Naive thymus-derived CD4-positive, alpha-beta T cell (primary cell): ENCODE measurements at regions of chr2 and their contacts with region 1.

Region 1: GRCh38 chr2:70283500-70284191 is 9.9 kb downstream of the SNRPG start:
- DNase-seq: no peak
- ATAC-seq: no peak
- H3K4me3 ChIP-seq: no peak overlapping the region
- H3K4me3 Mint-ChIP-seq: peak overlapping the region in 4 of 10 donors; percentile 6 to 53 (median 42)
- H3K27ac ChIP-seq: peak overlapping the region; percentile 7
- H3K27ac Mint-ChIP-seq: peak overlapping the region in 8 of 9 donors; percentile 6 to 71 (median 48)
- H3K4me1 ChIP-seq: no peaks in the 10 kb centered on the region
- H3K4me1 Mint-ChIP-seq: peaks cover 18 to 62% (median 54%) of the 10 kb centered on the region in 7 donors
- H3K27me3 ChIP-seq: no peaks in the 10 kb centered on the region
- H3K27me3 Mint-ChIP-seq: no peaks in the 10 kb centered on the region

Region 2: GRCh38 chr2:70240599-70240998 is 43.0 kb before region 1 on chr2:
- CTCF ChIA-PET with region 1: no interaction called
- POLR2A ChIA-PET with region 1: no interaction called
- intact Hi-C with region 1: no loop called
- DNase-seq: no peak
- ATAC-seq: no peak
- H3K4me3 ChIP-seq: no peak overlapping the region
- H3K4me3 Mint-ChIP-seq: no peak overlapping the region
- H3K27ac ChIP-seq: no peak overlapping the region
- H3K27ac Mint-ChIP-seq: no peak overlapping the region
- H3K4me1 ChIP-seq: peaks cover 12 to 18% of the 10 kb centered on the region in 2 donors
- H3K4me1 Mint-ChIP-seq: peaks cover 25 to 62% (median 51%) of the 10 kb centered on the region in 7 donors
- H3K27me3 ChIP-seq: no peaks in the 10 kb centered on the region
- H3K27me3 Mint-ChIP-seq: no peaks in the 10 kb centered on the region

Region 3: GRCh38 chr2:70270323-70270722 is 13.3 kb before region 1 on chr2:
- CTCF ChIA-PET with region 1: no interaction called
- POLR2A ChIA-PET with region 1: interaction called, 4 read pairs
- intact Hi-C with region 1: loop called in 1 of 2 experiments (anchors 2 kb)
- DNase-seq: no peak
- ATAC-seq: no peak
- H3K4me3 ChIP-seq: no peak overlapping the region
- H3K4me3 Mint-ChIP-seq: no peak overlapping the region
- H3K27ac ChIP-seq: no peak overlapping the region
- H3K27ac Mint-ChIP-seq: peak overlapping the region in 2 of 9 donors; percentile 16 to 43
- H3K4me1 ChIP-seq: no peaks in the 10 kb centered on the region
- H3K4me1 Mint-ChIP-seq: peaks cover 7 to 24% (median 18%) of the 10 kb centered on the region in 7 donors
- H3K27me3 ChIP-seq: no peaks in the 10 kb centered on the region
- H3K27me3 Mint-ChIP-seq: no peaks in the 10 kb centered on the region